ENCODE measurements at regions of chr3 and their contacts with region 1.

Region 1: GRCh38 chr3:120450600-120451271 is at the start of gene FSTL1:
- DNase-seq: peak in 1 of 2 experiments; percentile 46
- H3K4me3 ChIP-seq: peak within 1 kb of the TSS; percentile 74
- H3K27ac ChIP-seq: peak within 1 kb of the TSS; percentile 53
- H3K4me1 ChIP-seq: peaks cover 20% of the 10 kb centered on the region
- H3K27me3 ChIP-seq: no peaks in the 10 kb centered on the region
- CTCF ChIP-seq: no peak
- total RNA-seq, gene FSTL1: 225 and 256 TPM in 2 replicates

Region 2: GRCh38 chr3:120382941-120383447 is 67.7 kb before region 1 on chr3:
- CTCF ChIA-PET with region 1: no interaction called
- POLR2A ChIA-PET with region 1: no interaction called
- intact Hi-C with region 1: no loop called
- DNase-seq: no peak
- H3K4me3 ChIP-seq: no peak overlapping the region
- H3K27ac ChIP-seq: no peak overlapping the region
- H3K4me1 ChIP-seq: no peaks in the 10 kb centered on the region
- H3K27me3 ChIP-seq: no peaks in the 10 kb centered on the region
- CTCF ChIP-seq: no peak

Region 3: DNA sequence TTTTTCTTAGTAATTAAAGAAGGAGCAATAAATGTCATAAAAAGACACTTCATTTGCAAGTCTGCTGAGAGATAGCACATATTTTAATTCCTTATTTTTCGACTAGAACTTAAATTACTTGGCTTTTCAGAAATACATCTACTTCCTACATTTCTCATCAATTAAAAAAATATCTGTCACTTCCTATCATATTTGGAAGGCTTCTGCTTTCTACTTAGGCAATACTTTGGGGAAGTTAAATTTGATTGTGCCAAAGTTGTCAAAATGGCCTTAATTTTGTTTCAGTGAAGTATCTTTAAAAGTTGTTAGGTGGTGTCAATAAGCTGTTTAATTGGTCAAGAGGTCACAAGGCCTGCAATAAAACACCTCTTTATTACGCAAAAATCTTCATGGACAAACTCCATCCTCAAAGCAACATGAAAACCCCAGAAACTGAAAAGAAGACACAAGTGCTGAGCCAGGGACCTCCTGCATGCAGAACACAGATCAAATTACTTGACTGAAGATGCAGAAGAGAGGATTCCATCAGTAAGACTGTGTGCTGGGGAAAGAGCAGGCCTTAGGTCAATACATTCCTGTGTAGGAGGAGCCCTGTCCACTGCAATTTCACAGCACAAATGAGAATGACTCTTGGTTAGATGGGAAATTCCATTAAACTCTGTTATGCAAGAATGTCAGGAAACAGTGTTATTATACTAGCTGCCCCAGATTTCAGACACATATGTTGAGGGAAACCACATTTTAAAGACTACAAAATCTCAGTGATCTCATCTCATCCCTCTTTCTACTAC is 48.0 kb after region 1 on chr3:
- CTCF ChIA-PET with region 1: no interaction called
- POLR2A ChIA-PET with region 1: interaction called, 7 read pairs
- intact Hi-C with region 1: loop called (anchors 1 kb)
- DNase-seq: peak; percentile 46 to 82
- H3K4me3 ChIP-seq: no peak overlapping the region
- H3K27ac ChIP-seq: peak overlapping the region; percentile 20
- H3K4me1 ChIP-seq: peaks cover 22% of the 10 kb centered on the region
- H3K27me3 ChIP-seq: no peaks in the 10 kb centered on the region
- CTCF ChIP-seq: no peak

Region 4: GRCh38 chr3:120506828-120507774 is 56.4 kb after region 1 on chr3:
- CTCF ChIA-PET with region 1: interaction called, 3 read pairs
- POLR2A ChIA-PET with region 1: interaction called, 7 read pairs
- intact Hi-C with region 1: loop called (anchors 2 kb)
- DNase-seq: peak; percentile 30 to 47
- H3K4me3 ChIP-seq: no peak overlapping the region
- H3K27ac ChIP-seq: no peak overlapping the region
- H3K4me1 ChIP-seq: peaks cover 9% of the 10 kb centered on the region
- H3K27me3 ChIP-seq: no peaks in the 10 kb centered on the region
- CTCF ChIP-seq: peak; percentile 76

Region 5: DNA sequence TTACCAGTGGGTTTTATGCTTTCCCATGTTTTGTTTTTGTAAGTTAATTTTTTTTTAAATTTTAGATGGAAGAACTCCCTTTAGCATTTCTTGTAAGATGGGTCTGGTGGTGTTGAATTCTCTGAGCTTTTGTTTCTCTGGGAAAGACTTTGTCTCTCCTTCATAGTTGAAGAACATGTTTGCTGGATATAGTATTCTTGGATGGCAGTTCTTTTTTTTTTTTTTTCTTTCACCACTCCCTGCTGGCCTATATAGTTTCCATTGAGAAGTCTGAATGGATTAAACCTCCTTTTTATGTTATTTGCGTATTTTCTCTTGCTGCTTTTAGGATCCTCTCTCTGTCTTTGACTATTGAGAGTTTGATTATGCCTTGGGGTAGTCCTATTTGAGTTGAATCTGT is 475.4 kb after region 1 on chr3:
- CTCF ChIA-PET with region 1: no interaction called
- POLR2A ChIA-PET with region 1: no interaction called
- intact Hi-C with region 1: no loop called
- DNase-seq: no peak
- H3K4me3 ChIP-seq: no peak overlapping the region
- H3K27ac ChIP-seq: no peak overlapping the region
- H3K4me1 ChIP-seq: no peaks in the 10 kb centered on the region
- H3K27me3 ChIP-seq: no peaks in the 10 kb centered on the region
- CTCF ChIP-seq: no peak